H1 (cell line): ENCODE measurements at regions of chr1 and their contacts with region 1.

Region 1: DNA sequence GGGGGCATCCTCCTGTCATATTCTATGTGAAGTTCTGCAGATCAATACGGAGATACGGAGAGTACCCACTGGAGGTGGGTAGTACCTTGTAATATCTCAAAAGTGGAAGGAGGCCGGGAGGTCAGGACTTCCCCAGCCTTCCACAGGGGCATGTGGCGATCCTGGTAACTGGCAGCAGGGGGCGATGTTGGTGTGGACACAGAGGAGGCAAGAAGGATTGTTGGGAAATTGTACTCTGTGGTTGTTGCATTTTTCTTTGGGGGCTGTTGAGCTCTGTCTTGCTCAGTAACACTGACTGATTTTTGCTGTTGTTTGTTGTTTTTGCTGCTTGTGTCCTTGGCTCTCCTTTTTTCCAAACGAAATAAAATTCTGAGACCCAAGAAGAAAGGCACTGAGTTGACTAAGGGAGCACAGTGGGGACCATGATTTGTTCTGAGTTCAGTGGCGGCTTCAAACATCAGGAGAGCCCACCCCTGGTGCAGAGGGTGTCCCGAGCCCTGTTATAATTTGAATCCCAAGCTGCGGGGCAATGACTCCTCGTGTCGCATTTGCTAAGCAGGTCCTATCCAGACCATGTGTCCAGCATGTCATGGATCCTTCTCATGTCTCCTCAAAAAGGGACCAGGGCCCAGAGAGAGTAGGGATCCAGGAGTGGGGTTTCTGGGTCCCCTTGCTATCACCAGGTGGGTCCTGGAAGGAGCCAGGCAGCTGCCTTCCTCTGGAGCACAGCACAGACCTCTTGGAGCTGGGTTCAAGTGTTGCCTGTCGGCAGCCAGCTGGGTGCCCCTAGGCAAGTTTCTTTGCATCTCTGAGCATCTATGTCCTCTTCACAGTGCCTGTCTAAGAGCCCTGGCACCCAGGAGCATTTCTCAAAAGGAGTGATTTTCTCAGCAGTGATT is 22.8 kb downstream of the LHX4 start:
- DNase-seq: peak in 1 of 2 experiments; percentile 98
- H3K4me3 ChIP-seq: no peak overlapping the region
- H3K27ac ChIP-seq: no peak overlapping the region
- H3K4me1 ChIP-seq: peaks cover 0 to 22% (median 12%) of the 10 kb centered on the region in 4 experiments; a peak in 6 of 7 replicates
- H3K27me3 ChIP-seq: no peaks in the 10 kb centered on the region; a peak in 1 of 7 replicates
- CTCF ChIP-seq: peak; percentile 95 to 98 (median 98)
- EP300 ChIP-seq: no peak
- POLR2A ChIP-seq: no peak
- RAD21 ChIP-seq: peak; percentile 92 to 94

Region 2: GRCh38 chr1:179926494-179927205 is 326.2 kb before region 1 on chr1:
- CTCF ChIA-PET with region 1: no interaction called
- POLR2A ChIA-PET with region 1: no interaction called
- DNase-seq: no peak
- H3K4me3 ChIP-seq: no peak overlapping the region
- H3K27ac ChIP-seq: no peak overlapping the region
- H3K4me1 ChIP-seq: peaks cover 0 to 9% (median 3%) of the 10 kb centered on the region in 4 experiments; a peak in 2 of 7 replicates
- H3K27me3 ChIP-seq: peaks cover 0 to 1% (median 0%) of the 10 kb centered on the region in 4 experiments; a peak in 1 of 7 replicates
- CTCF ChIP-seq: no peak
- EP300 ChIP-seq: no peak
- POLR2A ChIP-seq: no peak
- RAD21 ChIP-seq: no peak

Region 3: GRCh38 chr1:180178511-180179161 is 74.3 kb before region 1 on chr1:
- CTCF ChIA-PET with region 1: interaction called, 26 read pairs
- POLR2A ChIA-PET with region 1: no interaction called
- DNase-seq: peak in 1 of 2 experiments; percentile 93
- H3K4me3 ChIP-seq: no peak overlapping the region
- H3K27ac ChIP-seq: no peak overlapping the region
- H3K4me1 ChIP-seq: no peaks in the 10 kb centered on the region
- H3K27me3 ChIP-seq: no peaks in the 10 kb centered on the region
- CTCF ChIP-seq: peak; percentile 77 to 94 (median 83)
- EP300 ChIP-seq: no peak
- POLR2A ChIP-seq: no peak
- RAD21 ChIP-seq: peak; percentile 90 to 91

Region 4: GRCh38 chr1:180229152-180229973 is 23.5 kb before region 1 on chr1:
- CTCF ChIA-PET with region 1: interaction called, 31 read pairs
- POLR2A ChIA-PET with region 1: interaction called, 12 read pairs
- DNase-seq: peak in 1 of 2 experiments; percentile 85
- H3K4me3 ChIP-seq: peak overlapping the region; percentile 45 to 67 (median 56)
- H3K27ac ChIP-seq: no peak overlapping the region
- H3K4me1 ChIP-seq: peaks cover 13 to 33% (median 21%) of the 10 kb centered on the region in 4 experiments
- H3K27me3 ChIP-seq: peaks cover 35 to 69% (median 55%) of the 10 kb centered on the region in 4 experiments
- CTCF ChIP-seq: no peak
- EP300 ChIP-seq: no peak
- POLR2A ChIP-seq: no peak
- RAD21 ChIP-seq: no peak

Region 5: DNA sequence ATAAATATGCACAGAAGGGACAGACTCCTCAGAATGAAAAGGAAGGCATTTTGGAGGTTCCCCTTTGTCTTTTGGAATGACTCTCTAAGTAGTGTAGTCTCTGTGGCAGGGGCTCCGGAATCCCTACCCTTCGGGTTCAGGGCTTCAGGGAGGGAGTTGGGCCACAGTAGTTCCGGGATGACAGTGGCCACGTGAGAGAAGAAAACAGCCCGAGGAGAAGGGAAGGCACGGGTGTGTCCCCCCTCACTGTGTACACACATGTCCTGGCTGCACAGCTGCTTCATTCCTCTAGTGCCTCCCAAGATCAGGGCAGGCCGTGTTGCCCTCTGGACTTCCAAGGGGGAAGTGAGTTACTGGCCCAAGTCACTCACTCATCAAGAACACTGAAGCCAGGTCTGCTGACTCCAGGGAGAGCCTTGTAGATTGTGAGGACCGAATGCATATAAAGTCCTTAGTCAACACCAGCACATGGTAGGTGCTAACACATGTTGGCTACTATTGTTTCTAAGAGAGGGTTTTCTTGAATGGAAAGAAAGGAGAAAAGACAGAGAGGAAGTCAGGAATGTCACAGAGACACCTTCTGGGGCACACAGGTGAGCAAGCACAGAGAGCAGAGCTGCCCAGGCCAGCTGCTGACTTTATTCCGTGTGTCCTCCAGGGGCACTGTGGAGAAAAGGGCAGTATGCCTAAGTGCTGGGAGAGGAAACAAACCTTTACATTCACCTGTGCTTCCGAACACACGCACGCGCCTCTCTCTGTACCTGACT is 17.1 kb after region 1 on chr1:
- CTCF ChIA-PET with region 1: interaction called, 244 read pairs
- POLR2A ChIA-PET with region 1: interaction called, 17 read pairs
- DNase-seq: peak in 1 of 2 experiments; percentile 63
- H3K4me3 ChIP-seq: no peak overlapping the region
- H3K27ac ChIP-seq: no peak overlapping the region
- H3K4me1 ChIP-seq: peaks cover 15 to 48% (median 31%) of the 10 kb centered on the region in 4 experiments
- H3K27me3 ChIP-seq: no peaks in the 10 kb centered on the region; a peak in 1 of 7 replicates
- CTCF ChIP-seq: peak; percentile 50 to 85 (median 82)
- EP300 ChIP-seq: no peak
- POLR2A ChIP-seq: no peak
- RAD21 ChIP-seq: peak; percentile 46 to 60

Region 6: DNA sequence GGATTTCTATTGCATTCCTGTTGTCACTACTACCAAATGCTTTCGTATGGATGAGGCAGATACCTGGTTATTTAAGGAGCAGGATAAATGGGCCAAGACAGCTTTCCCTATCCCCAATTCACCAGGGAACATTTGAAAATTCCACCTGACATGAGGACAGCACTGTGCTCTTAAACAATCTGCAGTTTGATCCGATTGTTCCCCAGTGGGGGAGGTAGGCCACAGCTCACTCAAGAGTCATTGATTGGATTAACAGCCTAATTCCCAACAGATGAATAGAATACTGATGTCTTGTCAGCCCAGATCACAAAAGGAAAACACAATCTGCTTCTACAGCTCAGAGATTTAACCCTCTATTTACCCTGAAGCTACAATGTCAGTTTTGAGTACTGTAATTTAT is 101.1 kb after region 1 on chr1:
- CTCF ChIA-PET with region 1: interaction called, 19 read pairs
- POLR2A ChIA-PET with region 1: interaction called, 3 read pairs
- DNase-seq: peak in 1 of 2 experiments; percentile 9
- H3K4me3 ChIP-seq: no peak overlapping the region
- H3K27ac ChIP-seq: no peak overlapping the region
- H3K4me1 ChIP-seq: peaks cover 0 to 5% (median 2%) of the 10 kb centered on the region in 4 experiments; a peak in 2 of 7 replicates
- H3K27me3 ChIP-seq: no peaks in the 10 kb centered on the region
- CTCF ChIP-seq: no peak
- EP300 ChIP-seq: no peak
- POLR2A ChIP-seq: no peak
- RAD21 ChIP-seq: no peak

Region 7: GRCh38 chr1:180482425-180483275 is 229.8 kb after region 1 on chr1:
- CTCF ChIA-PET with region 1: interaction called, 34 read pairs
- POLR2A ChIA-PET with region 1: no interaction called
- DNase-seq: no peak
- H3K4me3 ChIP-seq: no peak overlapping the region
- H3K27ac ChIP-seq: no peak overlapping the region
- H3K4me1 ChIP-seq: peaks cover 0 to 5% (median 1%) of the 10 kb centered on the region in 4 experiments; a peak in 3 of 7 replicates
- H3K27me3 ChIP-seq: no peaks in the 10 kb centered on the region
- CTCF ChIP-seq: peak in 2 of 3 experiments; percentile 27 to 54; a peak in 2 of 4 replicates
- EP300 ChIP-seq: no peak
- POLR2A ChIP-seq: no peak
- RAD21 ChIP-seq: peak; percentile 33; a peak in 3 of 4 replicates